Sciatic nerve (tissue), 2 donors: ENCODE measurements at regions of chr21 and their contacts with region 1.

Region 1: GRCh38 chr21:15301014-15301413 is 236.2 kb upstream of the NRIP1 start:
- DNase-seq: no peak
- ATAC-seq: no peak

Region 2: DNA sequence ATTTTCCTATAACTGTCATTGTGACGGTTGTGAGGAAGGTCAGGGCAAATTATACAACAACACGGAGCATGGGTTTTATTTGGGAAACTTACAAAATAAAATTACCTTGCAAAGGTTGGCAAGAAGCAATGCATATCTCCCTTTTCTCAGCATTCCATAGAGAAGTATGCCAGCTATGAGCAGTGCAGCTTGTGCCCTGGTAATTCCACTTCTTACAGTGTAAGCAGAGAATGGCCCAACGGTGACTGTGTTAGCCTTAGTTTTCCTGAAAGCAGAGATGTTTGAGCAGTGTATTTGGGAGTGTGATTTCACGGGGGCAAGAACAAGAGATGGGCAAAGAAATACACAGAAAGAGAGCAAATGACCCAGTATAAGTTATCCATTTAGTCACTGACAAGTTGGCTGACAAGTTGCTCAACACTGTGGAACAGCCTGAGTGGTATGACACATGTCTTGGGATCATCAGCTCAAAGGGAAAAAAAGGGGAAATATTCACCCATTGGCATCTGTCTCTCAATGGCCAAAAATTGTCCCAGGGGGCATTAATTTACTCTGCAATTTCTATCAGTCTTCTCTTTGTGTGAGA is 25.3 kb before region 1 on chr21:
- intact Hi-C with region 1: no loop called
- DNase-seq: no peak
- ATAC-seq: no peak

Region 3: GRCh38 chr21:15370462-15370975 is 69.5 kb after region 1 on chr21:
- intact Hi-C with region 1: loop called (anchors 2 kb)
- DNase-seq: no peak
- ATAC-seq: no peak

Region 4: GRCh38 chr21:15400905-15401304 is 99.9 kb after region 1 on chr21:
- intact Hi-C with region 1: no loop called
- DNase-seq: no peak
- ATAC-seq: no peak